Activated T-helper 2 cell treated with anti-CD3 and anti-CD28 coated beads, Interferon-gamma antibody, Interleukin-2, Interleukin-4, amounts not matched to agents 10 μg/mL and 5 μg/mL and 100 μg/mL, durations not matched to agents 14 hours and 24 hours and 36 hours (primary cell): ENCODE measurements at regions of chr4 and their contacts with region 1.

Region 1: DNA sequence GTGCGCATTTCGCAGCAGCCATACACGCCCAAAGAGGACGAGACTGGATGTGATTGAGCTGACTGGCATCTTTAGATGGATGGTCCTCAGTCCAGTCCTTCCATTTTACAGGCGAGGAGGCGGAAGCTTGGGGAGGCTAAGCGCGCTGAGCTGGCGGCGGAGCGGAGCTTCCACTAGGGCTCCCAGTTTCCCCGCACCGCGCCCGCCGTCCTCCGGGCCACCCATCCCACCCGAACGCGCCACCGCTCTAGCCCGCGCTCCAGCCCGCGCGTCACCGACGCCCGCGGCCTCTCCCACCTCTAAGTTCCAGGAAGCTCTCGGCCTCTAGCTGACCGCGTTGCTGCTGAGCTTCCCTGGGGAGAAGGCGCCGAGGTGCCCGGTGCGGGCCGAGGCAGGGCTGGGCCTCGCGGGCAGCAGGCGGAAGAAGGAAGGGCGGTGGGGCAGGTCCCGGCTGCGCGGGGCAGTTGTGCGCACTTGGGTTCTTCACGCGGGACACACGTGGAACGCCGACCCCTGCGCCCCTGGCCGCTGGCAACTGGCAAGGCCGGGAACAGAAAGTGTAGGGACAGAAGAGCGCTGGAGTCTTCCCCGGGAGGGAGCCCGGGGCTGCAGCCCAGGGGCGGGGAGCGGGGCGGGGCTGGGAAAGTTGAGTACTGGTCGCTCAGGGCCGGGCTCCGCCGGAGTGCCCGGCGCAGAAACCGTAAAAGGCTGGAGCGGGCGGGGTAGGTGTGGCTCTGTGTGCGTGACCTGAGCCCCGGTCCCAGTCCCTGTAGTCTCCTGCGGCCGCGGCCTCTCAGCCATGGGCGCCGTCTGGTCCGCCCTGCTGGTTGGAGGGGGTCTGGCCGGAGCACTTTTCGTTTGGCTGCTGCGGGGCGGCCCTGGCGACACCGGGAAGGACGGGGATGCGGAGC is at the start of gene STBD1:
- DNase-seq: peak; percentile 23
- H3K4me3 Mint-ChIP-seq: peak within 1 kb of the TSS; percentile 57
- H3K27ac Mint-ChIP-seq: no peak within 1 kb of the TSS
- H3K4me1 Mint-ChIP-seq: peaks cover 33% of the 10 kb centered on the region
- H3K27me3 Mint-ChIP-seq: peaks cover 41% of the 10 kb centered on the region
- total RNA-seq, gene STBD1: 0.09 TPM in 2 replicates

Region 2: GRCh38 chr4:76028350-76028765 is 277.9 kb before region 1 on chr4:
- intact Hi-C with region 1: loop called (anchors 10 kb)
- DNase-seq: no peak
- H3K4me3 Mint-ChIP-seq: no peak overlapping the region
- H3K27ac Mint-ChIP-seq: no peak overlapping the region
- H3K4me1 Mint-ChIP-seq: peaks cover 28% of the 10 kb centered on the region
- H3K27me3 Mint-ChIP-seq: peaks cover 8% of the 10 kb centered on the region

Region 3: DNA sequence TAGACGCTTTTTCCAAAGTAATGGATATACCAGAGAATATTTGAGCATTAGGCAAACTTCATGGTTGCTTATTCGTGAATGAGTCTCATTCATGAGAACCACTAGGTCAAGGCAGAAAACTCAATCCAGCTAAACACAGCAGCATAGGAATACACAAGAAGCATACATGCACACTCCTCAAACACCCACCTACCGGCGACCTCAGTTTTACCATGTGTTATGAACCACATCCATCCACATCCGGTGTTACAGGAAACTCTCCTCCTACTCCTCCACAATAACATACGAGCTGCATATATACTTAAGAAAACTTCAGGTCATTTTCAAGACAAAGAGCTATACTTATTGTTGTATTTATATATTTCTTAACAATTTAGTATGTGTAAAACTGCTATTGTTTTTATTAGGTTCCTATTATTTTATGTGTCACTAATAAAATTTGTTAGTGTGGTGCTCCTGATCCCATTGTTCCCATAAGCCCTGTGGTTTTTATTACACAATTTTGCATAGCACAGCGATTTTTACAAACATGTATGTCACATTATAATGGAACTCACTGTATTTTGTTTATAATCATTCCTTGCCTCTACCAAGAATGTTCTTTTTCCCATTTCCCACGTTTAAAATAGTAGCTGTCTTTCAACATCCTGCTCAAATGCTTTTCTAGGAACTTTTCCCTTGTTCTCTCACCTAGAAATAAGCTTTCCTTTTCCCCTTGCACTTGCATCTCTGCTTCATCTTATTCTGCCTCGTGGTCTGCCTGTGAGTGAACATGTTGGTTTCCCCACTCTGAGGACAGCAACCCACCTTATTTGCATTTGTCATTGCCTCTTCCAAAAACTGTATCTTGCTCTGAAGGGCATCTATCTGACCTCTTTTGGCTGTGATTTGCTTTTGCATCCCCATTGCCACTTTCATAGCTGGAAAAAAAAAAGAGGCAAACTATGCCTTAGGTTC is 48.6 kb after region 1 on chr4:
- intact Hi-C with region 1: no loop called
- DNase-seq: no peak
- H3K4me3 Mint-ChIP-seq: no peak overlapping the region
- H3K27ac Mint-ChIP-seq: no peak overlapping the region
- H3K4me1 Mint-ChIP-seq: peaks cover 8% of the 10 kb centered on the region
- H3K27me3 Mint-ChIP-seq: peaks cover 2% of the 10 kb centered on the region

Region 4: DNA sequence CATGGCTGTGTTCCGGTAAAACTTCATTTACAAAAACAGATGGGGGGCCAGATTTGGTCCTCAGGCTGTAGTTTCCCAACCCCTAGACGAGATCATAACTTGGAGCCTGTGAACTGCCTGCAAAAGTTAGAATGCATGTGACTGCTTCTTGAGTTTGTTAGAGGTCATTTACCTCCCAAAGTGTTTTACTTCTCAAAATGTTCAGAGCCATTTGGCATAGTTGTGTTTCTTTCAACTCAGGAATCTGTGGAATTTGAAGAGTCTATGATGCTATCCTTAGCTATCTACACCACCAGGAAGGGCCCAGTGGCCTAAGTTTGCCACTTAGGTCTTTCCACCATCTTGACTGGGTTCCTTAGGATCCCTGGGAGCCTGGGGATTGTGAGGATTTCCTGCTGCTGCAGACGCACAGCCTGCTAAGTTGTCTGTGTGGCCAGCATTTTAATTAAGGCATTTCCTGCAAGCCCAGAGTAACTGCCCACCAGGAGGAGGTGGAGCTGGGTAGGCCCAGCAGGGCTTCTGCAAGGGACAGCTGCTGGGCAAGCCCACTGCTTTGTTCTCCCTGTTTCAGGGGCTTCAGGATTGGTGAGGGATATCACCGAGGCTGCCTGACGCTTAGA is 716.4 kb after region 1 on chr4:
- intact Hi-C with region 1: loop called (anchors 10 kb)
- DNase-seq: no peak
- H3K4me3 Mint-ChIP-seq: no peak overlapping the region
- H3K27ac Mint-ChIP-seq: no peak overlapping the region
- H3K4me1 Mint-ChIP-seq: peaks cover 23% of the 10 kb centered on the region
- H3K27me3 Mint-ChIP-seq: peaks cover 43% of the 10 kb centered on the region